PC-9 (cell line): ENCODE measurements at regions of chr7 and their contacts with region 1.

Region 1: GRCh38 chr7:21011118-21011517 is 224.4 kb upstream of the SP8 start:
- DNase-seq: peak; percentile 36 to 100
- H3K4me3 ChIP-seq: no peak overlapping the region
- H3K27ac ChIP-seq: peak overlapping the region; percentile 72
- H3K4me1 ChIP-seq: peaks cover 31% of the 10 kb centered on the region
- H3K27me3 ChIP-seq: no peaks in the 10 kb centered on the region
- CTCF ChIP-seq: no peak

Region 2: GRCh38 chr7:20991544-20991943 is 19.6 kb before region 1 on chr7:
- CTCF ChIA-PET with region 1: no interaction called
- POLR2A ChIA-PET with region 1: interaction called, 11 read pairs
- intact Hi-C with region 1: no loop called
- DNase-seq: no peak
- H3K4me3 ChIP-seq: no peak overlapping the region
- H3K27ac ChIP-seq: no peak overlapping the region
- H3K4me1 ChIP-seq: no peaks in the 10 kb centered on the region
- H3K27me3 ChIP-seq: no peaks in the 10 kb centered on the region
- CTCF ChIP-seq: peak; percentile 50

Region 3: DNA sequence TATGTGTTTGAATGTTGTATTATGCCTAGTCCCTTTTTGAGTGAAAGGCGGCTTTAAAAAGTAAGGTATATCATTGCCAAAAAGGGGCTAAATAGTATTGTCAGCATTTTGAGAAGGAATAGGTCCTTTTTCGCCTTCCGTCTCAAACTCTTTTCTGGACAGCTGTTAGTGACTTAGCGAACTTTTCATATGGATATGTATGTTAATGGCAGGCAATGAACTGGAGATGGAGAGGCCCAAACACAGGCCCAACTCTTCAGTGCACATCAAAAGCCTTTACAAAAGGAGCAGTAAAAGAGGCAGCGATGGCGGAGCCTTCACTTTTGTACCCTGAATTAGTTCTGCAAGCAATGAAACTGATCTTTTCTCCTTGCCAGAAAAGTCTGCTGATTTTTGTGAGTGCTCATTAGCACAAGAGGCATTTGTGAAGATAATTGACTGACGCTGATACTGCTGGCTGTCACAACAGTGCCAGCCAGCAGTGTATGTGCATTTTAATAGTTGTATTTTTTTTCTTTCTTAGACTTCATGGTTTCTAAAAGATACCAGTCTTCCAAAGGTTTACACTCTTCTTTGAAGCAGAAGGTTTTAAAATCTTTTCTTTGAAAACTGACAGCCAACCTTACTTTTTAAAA is 19.2 kb after region 1 on chr7:
- CTCF ChIA-PET with region 1: no interaction called
- POLR2A ChIA-PET with region 1: no interaction called
- intact Hi-C with region 1: no loop called
- DNase-seq: no peak
- H3K4me3 ChIP-seq: no peak overlapping the region
- H3K27ac ChIP-seq: no peak overlapping the region
- H3K4me1 ChIP-seq: no peaks in the 10 kb centered on the region
- H3K27me3 ChIP-seq: no peaks in the 10 kb centered on the region
- CTCF ChIP-seq: no peak